GM13977 (cell line): ENCODE measurements at regions of chr3 and their contacts with region 1.

Region 1: DNA sequence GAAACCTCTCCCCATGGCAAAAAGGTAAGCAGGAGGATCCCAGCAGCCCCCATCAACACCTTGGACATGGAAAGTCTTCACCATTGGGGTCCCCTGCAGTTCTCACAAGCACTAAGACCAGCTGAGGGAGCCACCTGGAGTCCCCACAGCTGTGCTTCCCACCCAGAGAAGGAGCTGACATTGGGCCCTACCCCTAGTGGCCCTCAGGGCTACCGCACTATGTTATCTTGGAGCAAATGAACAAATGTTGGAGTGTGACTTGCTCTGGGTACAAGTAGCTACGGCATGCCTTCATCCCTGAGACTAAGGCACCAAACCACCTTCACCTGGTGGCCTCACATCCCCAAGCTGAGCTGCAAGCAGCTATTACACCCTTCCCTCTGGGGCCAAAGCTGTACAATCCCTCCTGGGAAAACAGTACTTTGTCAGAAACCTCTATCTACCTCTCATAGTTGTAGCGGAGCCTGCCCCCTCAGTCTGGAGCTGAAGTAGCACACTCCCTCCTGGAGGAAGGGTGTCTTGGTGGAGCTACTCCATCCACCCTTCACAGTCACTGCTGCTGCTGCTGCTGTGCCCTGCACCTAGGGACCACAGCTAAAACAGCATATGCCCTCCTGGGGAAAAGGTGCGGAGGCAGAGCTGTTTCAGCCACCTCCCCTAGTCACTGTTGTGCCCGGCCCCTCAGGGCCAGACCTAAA is 42.7 kb downstream of the SERP1 start:
- DNase-seq: no peak
- CTCF ChIP-seq: no peak

Region 2: GRCh38 chr3:150238998-150239619 is 264.4 kb before region 1 on chr3:
- in situ Hi-C with region 1: no loop called
- DNase-seq: no peak
- CTCF ChIP-seq: peak; percentile 52

Region 3: GRCh38 chr3:150286390-150287147 is 217.0 kb before region 1 on chr3:
- in situ Hi-C with region 1: loop called (anchors 10 kb)
- DNase-seq: peak; percentile 33
- CTCF ChIP-seq: peak; percentile 64

Region 4: GRCh38 chr3:150428562-150428961 is 75.0 kb before region 1 on chr3:
- in situ Hi-C with region 1: no loop called
- DNase-seq: no peak
- CTCF ChIP-seq: no peak

Region 5: GRCh38 chr3:150844500-150844899 is 340.9 kb after region 1 on chr3:
- in situ Hi-C with region 1: no loop called
- DNase-seq: no peak
- CTCF ChIP-seq: no peak